Prostate gland (tissue), 2 donors: ENCODE measurements at regions of chr3 and their contacts with region 1.

Region 1: DNA sequence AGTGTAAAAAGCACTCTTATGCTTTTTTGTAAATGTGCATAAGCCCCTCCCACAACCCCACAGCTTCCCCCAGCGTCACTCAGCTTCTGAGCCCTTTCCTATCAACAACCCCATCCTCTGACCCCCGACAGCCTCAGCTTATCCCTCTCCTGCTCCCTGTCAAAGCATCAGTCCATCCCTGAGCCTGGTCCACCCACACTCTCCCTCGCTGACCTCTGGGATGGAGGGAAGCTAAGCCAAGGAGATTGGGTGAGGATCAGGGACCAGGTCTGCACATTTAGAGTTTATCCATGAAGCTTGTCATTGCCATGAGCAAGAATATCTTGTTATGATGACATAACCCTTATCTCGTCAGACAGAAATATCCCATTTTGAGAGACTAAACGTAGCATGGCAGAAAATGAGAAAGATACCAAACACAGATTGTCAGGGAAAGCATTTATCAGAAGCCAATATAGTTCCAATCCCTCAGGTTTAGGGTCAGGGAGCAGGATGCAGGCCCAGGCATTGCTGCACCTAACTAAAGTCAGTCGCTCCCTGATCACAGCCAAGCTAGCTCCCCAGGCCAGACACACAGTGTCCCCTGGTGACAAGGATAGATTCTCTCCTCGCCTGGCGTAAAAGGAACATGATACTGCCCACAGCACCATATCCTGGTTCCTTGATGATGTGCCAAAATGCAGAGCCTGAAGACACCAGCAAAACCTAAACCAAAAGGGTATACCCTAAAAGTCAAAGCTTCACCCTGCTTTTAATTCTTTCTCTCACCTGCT is 66.9 kb downstream of the DCLK3 start:
- DNase-seq: no peak
- H3K4me3 ChIP-seq: no peak overlapping the region
- H3K27ac ChIP-seq: no peak overlapping the region
- H3K4me1 ChIP-seq: no peaks in the 10 kb centered on the region
- H3K27me3 ChIP-seq: no peaks in the 10 kb centered on the region
- CTCF ChIP-seq: peak in 1 of 4 experiments; percentile 29
- POLR2A ChIP-seq: no peak

Region 2: GRCh38 chr3:35965908-35966307 is 731.5 kb before region 1 on chr3:
- intact Hi-C with region 1: loop called (anchors 2 kb)
- DNase-seq: no peak
- H3K4me3 ChIP-seq: no peak overlapping the region
- H3K27ac ChIP-seq: no peak overlapping the region
- H3K4me1 ChIP-seq: no peaks in the 10 kb centered on the region
- H3K27me3 ChIP-seq: no peaks in the 10 kb centered on the region
- CTCF ChIP-seq: peak in 3 of 4 experiments; percentile 12 to 52 (median 46)
- POLR2A ChIP-seq: no peak

Region 3: GRCh38 chr3:36332139-36332538 is 365.3 kb before region 1 on chr3:
- intact Hi-C with region 1: no loop called
- DNase-seq: no peak
- H3K4me3 ChIP-seq: no peak overlapping the region
- H3K27ac ChIP-seq: no peak overlapping the region
- H3K4me1 ChIP-seq: no peaks in the 10 kb centered on the region
- H3K27me3 ChIP-seq: no peaks in the 10 kb centered on the region
- CTCF ChIP-seq: no peak
- POLR2A ChIP-seq: no peak